CD14-positive monocyte (primary cell): ENCODE measurements at regions of chr10 and their contacts with region 1.

Region 1: DNA sequence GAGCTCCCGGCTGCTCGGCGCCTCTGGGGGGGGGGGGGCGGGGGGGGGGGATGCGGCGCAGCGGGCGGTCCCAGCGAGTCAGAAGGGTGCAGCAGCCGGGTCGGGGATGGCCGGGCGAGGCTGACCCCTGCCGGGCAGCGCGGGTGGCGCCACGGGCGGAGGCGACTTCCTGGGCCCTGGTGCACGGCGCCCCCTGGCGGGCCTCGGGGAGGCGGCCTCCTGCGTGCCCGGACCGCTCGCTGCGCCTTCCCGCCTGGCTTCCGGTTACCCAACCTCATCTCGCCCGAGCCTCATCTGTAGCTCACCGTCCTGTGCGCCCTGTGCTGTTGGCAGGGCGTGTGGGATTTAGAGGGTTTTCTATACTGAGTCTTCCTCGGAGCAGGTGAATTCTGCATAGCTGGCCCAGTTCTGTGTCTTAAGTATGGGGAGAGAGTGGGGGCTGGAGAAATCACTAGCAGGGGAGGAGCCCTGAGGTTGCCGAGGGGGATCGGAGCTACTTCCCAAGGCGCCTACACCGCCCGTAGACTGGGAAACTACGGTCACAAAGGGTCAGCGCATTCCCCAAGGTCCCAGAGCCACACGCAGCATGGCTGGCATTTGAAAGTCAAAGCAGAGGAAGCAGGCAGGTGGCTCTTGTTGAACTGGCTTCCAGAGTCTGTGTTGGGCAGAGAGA is 28.3 kb upstream of the WDFY4 start:
- DNase-seq: peak; percentile 91 to 96 (median 91)
- H3K4me3 ChIP-seq: peak overlapping the region; percentile 24 to 74 (median 44)
- H3K4me3 Mint-ChIP-seq: peak overlapping the region; percentile 71 to 83
- H3K27ac ChIP-seq: peak overlapping the region in 1 of 2 donors; percentile 54
- H3K27ac Mint-ChIP-seq: peak overlapping the region in 2 of 7 donors; percentile 8 to 60
- H3K4me1 ChIP-seq: peaks cover 36 to 38% of the 10 kb centered on the region in 2 donors
- H3K4me1 Mint-ChIP-seq: peaks cover 28% of the 10 kb centered on the region
- H3K27me3 ChIP-seq: peaks cover 0 to 8% of the 10 kb centered on the region in 2 donors
- H3K27me3 Mint-ChIP-seq: peaks cover 18 to 37% (median 22%) of the 10 kb centered on the region in 3 donors
- CTCF ChIP-seq: peak; percentile 100

Region 2: GRCh38 chr10:48363617-48364355 is 292.6 kb before region 1 on chr10:
- intact Hi-C with region 1: loop called (anchors 10 kb)
- DNase-seq: peak; percentile 23 to 50 (median 28)
- H3K4me3 ChIP-seq: no peak overlapping the region
- H3K4me3 Mint-ChIP-seq: no peak overlapping the region
- H3K27ac ChIP-seq: no peak overlapping the region
- H3K27ac Mint-ChIP-seq: no peak overlapping the region
- H3K4me1 ChIP-seq: no peaks in the 10 kb centered on the region
- H3K4me1 Mint-ChIP-seq: peaks cover 7% of the 10 kb centered on the region
- H3K27me3 ChIP-seq: no peaks in the 10 kb centered on the region
- H3K27me3 Mint-ChIP-seq: no peaks in the 10 kb centered on the region
- CTCF ChIP-seq: peak; percentile 79

Region 3: GRCh38 chr10:48608279-48608681 is 48.1 kb before region 1 on chr10:
- intact Hi-C with region 1: loop called (anchors 5 to 10 kb)
- DNase-seq: peak in 2 of 3 donors; percentile 48 to 49
- H3K4me3 ChIP-seq: no peak overlapping the region
- H3K4me3 Mint-ChIP-seq: peak overlapping the region in 1 of 2 donors; percentile 12
- H3K27ac ChIP-seq: peak overlapping the region in 1 of 2 donors; percentile 95
- H3K27ac Mint-ChIP-seq: peak overlapping the region in 3 of 7 donors; percentile 95 to 96 (median 96)
- H3K4me1 ChIP-seq: peaks cover 60 to 68% of the 10 kb centered on the region in 2 donors
- H3K4me1 Mint-ChIP-seq: peaks cover 63% of the 10 kb centered on the region
- H3K27me3 ChIP-seq: peaks cover 0 to 3% of the 10 kb centered on the region in 2 donors
- H3K27me3 Mint-ChIP-seq: peaks cover 4 to 17% (median 5%) of the 10 kb centered on the region in 3 donors
- CTCF ChIP-seq: peak; percentile 71

Region 4: DNA sequence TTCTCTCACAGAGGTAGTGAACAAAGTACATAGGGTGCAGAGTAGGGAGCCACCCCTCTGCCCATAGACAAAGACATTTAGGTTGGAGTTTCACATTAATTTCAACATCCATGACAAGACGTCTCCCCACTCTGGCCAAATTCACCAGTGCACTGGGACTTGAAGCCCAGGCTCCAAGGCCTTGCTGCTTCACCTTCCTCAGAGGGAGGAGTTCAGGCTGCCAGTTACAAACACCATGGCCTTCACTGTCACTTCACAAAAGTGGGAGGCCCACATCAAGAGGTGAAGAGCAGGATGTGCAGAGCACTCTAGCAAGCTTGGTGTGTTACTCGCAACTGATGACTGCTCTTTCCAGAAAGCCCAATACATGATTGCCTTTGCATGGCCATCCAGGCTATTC is 35.7 kb before region 1 on chr10:
- intact Hi-C with region 1: no loop called
- DNase-seq: no peak
- H3K4me3 ChIP-seq: no peak overlapping the region
- H3K4me3 Mint-ChIP-seq: no peak overlapping the region
- H3K27ac ChIP-seq: no peak overlapping the region
- H3K27ac Mint-ChIP-seq: peak overlapping the region in 1 of 7 donors; percentile 24
- H3K4me1 ChIP-seq: peaks cover 26 to 33% of the 10 kb centered on the region in 2 donors
- H3K4me1 Mint-ChIP-seq: peaks cover 30% of the 10 kb centered on the region
- H3K27me3 ChIP-seq: no peaks in the 10 kb centered on the region
- H3K27me3 Mint-ChIP-seq: peaks cover 2 to 6% (median 2%) of the 10 kb centered on the region in 3 donors
- CTCF ChIP-seq: no peak

Region 5: GRCh38 chr10:48802611-48803071 is 146.3 kb after region 1 on chr10:
- intact Hi-C with region 1: loop called in 1 of 2 experiments (anchors 10 kb)
- DNase-seq: no peak
- H3K4me3 ChIP-seq: no peak overlapping the region
- H3K4me3 Mint-ChIP-seq: no peak overlapping the region
- H3K27ac ChIP-seq: peak overlapping the region in 1 of 2 donors; percentile 20
- H3K27ac Mint-ChIP-seq: peak overlapping the region in 3 of 7 donors; percentile 8 to 55 (median 48)
- H3K4me1 ChIP-seq: peaks cover 79 to 86% of the 10 kb centered on the region in 2 donors
- H3K4me1 Mint-ChIP-seq: peaks cover 87% of the 10 kb centered on the region
- H3K27me3 ChIP-seq: no peaks in the 10 kb centered on the region
- H3K27me3 Mint-ChIP-seq: peaks cover 0 to 2% (median 0%) of the 10 kb centered on the region in 3 donors
- CTCF ChIP-seq: no peak